Breast epithelium (tissue), 4 donors: ENCODE measurements at regions of chr17 and their contacts with region 1.

Region 1: GRCh38 chr17:5675625-5676421 is 91.5 kb upstream of the NLRP1 start:
- DNase-seq: no peak
- H3K4me3 ChIP-seq: no peak overlapping the region
- H3K27ac ChIP-seq: no peak overlapping the region
- H3K4me1 ChIP-seq: no peaks in the 10 kb centered on the region
- H3K27me3 ChIP-seq: peaks cover 0 to 12% of the 10 kb centered on the region in 2 donors
- CTCF ChIP-seq: no peak
- POLR2A ChIP-seq: no peak

Region 2: DNA sequence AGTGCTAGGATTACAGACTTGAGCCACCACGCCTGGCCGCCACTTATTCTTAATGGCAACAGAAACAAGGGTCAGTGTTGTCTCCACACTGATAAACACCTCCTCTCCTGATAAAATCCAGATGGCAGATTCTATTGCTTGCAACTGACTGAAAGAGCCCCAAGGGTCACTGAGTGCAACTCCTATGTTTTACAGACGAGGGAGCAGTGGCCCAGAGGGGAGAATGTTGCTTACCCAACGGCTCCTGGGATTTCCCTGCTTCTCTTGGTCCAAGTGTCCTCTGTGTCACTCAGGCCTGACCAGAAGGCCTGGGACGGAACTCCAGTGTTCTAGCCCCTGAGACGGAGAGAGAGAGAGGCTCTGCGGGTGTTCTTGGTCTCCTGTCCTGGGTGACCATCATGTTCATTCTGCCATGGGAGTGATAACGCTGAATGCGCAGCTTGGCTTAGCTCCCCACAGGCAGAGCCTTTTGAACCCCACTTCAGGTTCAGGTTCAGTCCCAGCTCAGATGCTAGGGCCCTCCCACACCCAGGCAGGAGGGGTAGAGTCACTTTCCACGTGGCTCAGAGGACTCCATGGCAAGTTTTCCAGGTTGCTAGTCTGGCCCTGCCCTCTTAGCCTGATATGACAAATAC is 14.2 kb before region 1 on chr17:
- intact Hi-C with region 1: no loop called
- DNase-seq: no peak
- H3K4me3 ChIP-seq: no peak overlapping the region
- H3K27ac ChIP-seq: no peak overlapping the region
- H3K4me1 ChIP-seq: no peaks in the 10 kb centered on the region
- H3K27me3 ChIP-seq: peaks cover 0 to 16% of the 10 kb centered on the region in 2 donors
- CTCF ChIP-seq: no peak
- POLR2A ChIP-seq: no peak

Region 3: DNA sequence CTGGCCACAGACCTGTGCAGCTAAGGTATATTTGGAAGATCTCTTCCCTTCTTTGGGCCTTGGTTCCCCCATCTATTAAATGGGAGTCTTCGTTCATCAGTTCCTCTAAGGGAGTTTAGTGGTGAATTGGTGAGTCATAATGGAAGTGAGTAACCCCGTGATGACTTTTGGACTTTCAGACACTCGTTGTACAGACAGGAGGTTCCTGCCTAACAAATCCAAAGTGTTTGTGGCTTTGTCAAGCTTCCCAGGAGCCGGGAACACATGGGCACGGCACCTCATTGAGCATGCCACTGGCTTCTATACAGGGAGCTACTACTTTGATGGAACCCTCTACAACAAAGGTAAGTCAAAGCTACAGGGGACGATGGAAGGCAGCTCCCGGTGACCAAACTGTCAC is 434.8 kb after region 1 on chr17:
- intact Hi-C with region 1: loop called (anchors 5 kb)
- DNase-seq: no peak
- H3K4me3 ChIP-seq: no peak overlapping the region
- H3K27ac ChIP-seq: no peak overlapping the region
- H3K4me1 ChIP-seq: no peaks in the 10 kb centered on the region
- H3K27me3 ChIP-seq: peaks cover 0 to 12% of the 10 kb centered on the region in 2 donors
- CTCF ChIP-seq: no peak
- POLR2A ChIP-seq: no peak